ENCODE measurements at regions of chr9 and their contacts with region 1.

Region 1: DNA sequence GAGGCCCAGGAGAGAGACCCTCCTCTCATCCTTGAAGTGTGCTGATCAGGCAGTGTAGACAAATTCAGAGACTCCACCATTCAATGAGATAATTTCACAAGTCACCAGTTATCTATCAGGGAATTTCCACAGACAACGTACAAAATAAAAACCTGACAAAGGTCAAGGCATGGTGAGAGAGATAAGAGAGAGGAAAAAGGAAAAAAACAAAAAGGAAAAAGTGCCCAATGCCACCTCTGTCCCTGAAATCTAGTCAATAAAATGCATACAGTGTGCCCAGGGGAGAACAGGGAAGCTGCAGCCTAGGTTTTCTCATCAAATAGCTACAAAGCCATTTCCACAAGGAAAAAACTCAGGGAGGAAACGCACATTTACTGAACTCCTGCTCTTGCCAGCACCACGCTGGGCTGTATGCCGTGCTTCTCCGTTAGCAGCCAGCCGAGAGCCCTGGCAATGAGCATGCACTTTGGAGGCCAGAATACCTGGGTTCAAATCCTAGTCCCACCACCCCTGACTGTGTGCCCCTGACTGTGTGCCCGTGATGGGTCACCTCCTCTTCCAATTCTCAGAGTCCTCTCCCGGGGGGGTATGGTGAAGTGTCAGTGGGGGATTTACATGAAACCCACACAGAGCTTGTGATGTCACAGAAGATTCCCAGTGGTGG is 11.6 kb downstream of the WHRN start:
- DNase-seq: no peak
- ATAC-seq: no peak

Region 2: GRCh38 chr9:113886466-113886865 is 607.2 kb before region 1 on chr9:
- intact Hi-C with region 1: no loop called
- DNase-seq: no peak
- ATAC-seq: peak; percentile 57

Region 3: GRCh38 chr9:114291064-114291474 is 202.6 kb before region 1 on chr9:
- intact Hi-C with region 1: no loop called
- DNase-seq: peak; percentile 88
- ATAC-seq: peak; percentile 73

Region 4: GRCh38 chr9:114418053-114418452 is 75.6 kb before region 1 on chr9:
- intact Hi-C with region 1: loop called (anchors 2 kb)
- DNase-seq: no peak
- ATAC-seq: no peak

Measured in sciatic nerve (tissue), 2 donors.